Natural killer cell (primary cell): ENCODE measurements at regions of chr1 and their contacts with region 1.

Region 1: GRCh38 chr1:53582211-53583020 is 123.2 kb downstream of the DMRTB1 start:
- DNase-seq: peak; percentile 56 to 75
- ATAC-seq: peak; percentile 76 to 87 (median 84)
- H3K4me3 ChIP-seq: no peak overlapping the region
- H3K4me3 Mint-ChIP-seq: peak overlapping the region; percentile 35
- H3K27ac ChIP-seq: peak overlapping the region; percentile 19
- H3K27ac Mint-ChIP-seq: peak overlapping the region; percentile 31 to 87
- H3K4me1 ChIP-seq: peaks cover 56% of the 10 kb centered on the region
- H3K4me1 Mint-ChIP-seq: peaks cover 52 to 56% of the 10 kb centered on the region in 2 donors
- H3K27me3 ChIP-seq: peaks cover 7% of the 10 kb centered on the region
- H3K27me3 Mint-ChIP-seq: peaks cover 46 to 48% of the 10 kb centered on the region in 2 donors
- CTCF ChIP-seq: no peak

Region 2: DNA sequence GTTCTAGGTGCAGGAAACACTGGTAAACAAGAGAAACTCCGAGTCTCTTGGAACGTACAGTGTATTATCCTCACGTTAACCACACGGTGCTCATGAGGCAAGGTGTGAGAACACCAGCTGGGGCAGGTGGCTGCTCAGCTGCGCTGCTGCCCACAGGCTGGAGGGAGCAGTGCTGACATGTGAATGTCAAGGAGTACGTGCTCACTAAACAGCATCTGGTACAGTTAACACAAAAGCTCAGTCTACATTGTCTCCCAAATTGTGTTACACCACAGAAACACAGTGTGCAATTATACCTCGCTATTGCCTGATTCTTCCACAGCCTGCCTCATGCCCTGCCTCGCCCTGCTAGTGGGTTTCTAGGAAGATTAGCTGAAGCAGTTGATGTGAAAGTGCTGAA is 18.1 kb after region 1 on chr1:
- intact Hi-C with region 1: loop called (anchors 2 kb)
- DNase-seq: peak; percentile 39 to 73
- ATAC-seq: peak; percentile 85 to 98 (median 94)
- H3K4me3 ChIP-seq: no peak overlapping the region
- H3K4me3 Mint-ChIP-seq: no peak overlapping the region
- H3K27ac ChIP-seq: no peak overlapping the region
- H3K27ac Mint-ChIP-seq: no peak overlapping the region
- H3K4me1 ChIP-seq: peaks cover 44% of the 10 kb centered on the region
- H3K4me1 Mint-ChIP-seq: peaks cover 13 to 32% of the 10 kb centered on the region in 2 donors
- H3K27me3 ChIP-seq: no peaks in the 10 kb centered on the region
- H3K27me3 Mint-ChIP-seq: peaks cover 5 to 14% of the 10 kb centered on the region in 2 donors
- CTCF ChIP-seq: no peak